ENCODE measurements at regions of chr14 and their contacts with region 1.

Region 1: GRCh38 chr14:24232121-24232644 is at the start of gene NEDD8:
- DNase-seq: peak; percentile 90 to 94
- ATAC-seq: peak; percentile 89 to 96 (median 91)
- H3K4me3 ChIP-seq: peak within 1 kb of the TSS; percentile 65 to 97 (median 91)
- H3K27ac ChIP-seq: peak within 1 kb of the TSS; percentile 74 to 97 (median 90)
- H3K4me1 ChIP-seq: peaks cover 18 to 47% (median 34%) of the 10 kb centered on the region in 9 donors
- H3K27me3 ChIP-seq: no peaks in the 10 kb centered on the region
- CTCF ChIP-seq: no peak
- total RNA-seq, gene NEDD8: 178 to 228 (median 199) TPM

Region 2: GRCh38 chr14:23237772-23238594 is 994.2 kb before region 1 on chr14 and contains the start of gene RNF212B:
- intact Hi-C with region 1: no loop called
- DNase-seq: peak; percentile 85 to 91
- ATAC-seq: peak; percentile 96 to 100 (median 98)
- H3K4me3 ChIP-seq: peak within 1 kb of the TSS in 8 of 10 donors; percentile 6 to 48 (median 34)
- H3K27ac ChIP-seq: no peak within 1 kb of the TSS
- H3K4me1 ChIP-seq: peaks cover 0 to 10% (median 2%) of the 10 kb centered on the region in 9 donors
- H3K27me3 ChIP-seq: peaks cover 0 to 10% (median 0%) of the 10 kb centered on the region in 7 donors
- CTCF ChIP-seq: no peak
- total RNA-seq, gene RNF212B: not detected

Region 3: GRCh38 chr14:24188251-24189058 is 43.7 kb before region 1 on chr14 and contains the start of gene IPO4:
- intact Hi-C with region 1: loop called in 1 of 10 experiments (anchors 2 kb)
- DNase-seq: peak; percentile 92 to 97
- ATAC-seq: peak; percentile 89 to 98 (median 95)
- H3K4me3 ChIP-seq: peak within 1 kb of the TSS; percentile 58 to 94 (median 68)
- H3K27ac ChIP-seq: peak within 1 kb of the TSS; percentile 17 to 83 (median 68)
- H3K4me1 ChIP-seq: peaks cover 4 to 24% (median 19%) of the 10 kb centered on the region in 9 donors
- H3K27me3 ChIP-seq: no peaks in the 10 kb centered on the region
- CTCF ChIP-seq: no peak
- total RNA-seq, gene IPO4: 10.1 to 22.5 (median 12.6) TPM